ENCODE measurements at regions of chr6 and their contacts with region 1.

Region 1: GRCh38 chr6:7725849-7726415 is at the start of gene BMP6:
- H3K4me3 ChIP-seq: peak within 1 kb of the TSS; percentile 48
- H3K27ac ChIP-seq: peak within 1 kb of the TSS; percentile 33; the same call in 1 of the 2 replicates
- H3K4me1 ChIP-seq: peaks cover 15% of the 10 kb centered on the region
- CTCF ChIP-seq: no peak

Region 2: DNA sequence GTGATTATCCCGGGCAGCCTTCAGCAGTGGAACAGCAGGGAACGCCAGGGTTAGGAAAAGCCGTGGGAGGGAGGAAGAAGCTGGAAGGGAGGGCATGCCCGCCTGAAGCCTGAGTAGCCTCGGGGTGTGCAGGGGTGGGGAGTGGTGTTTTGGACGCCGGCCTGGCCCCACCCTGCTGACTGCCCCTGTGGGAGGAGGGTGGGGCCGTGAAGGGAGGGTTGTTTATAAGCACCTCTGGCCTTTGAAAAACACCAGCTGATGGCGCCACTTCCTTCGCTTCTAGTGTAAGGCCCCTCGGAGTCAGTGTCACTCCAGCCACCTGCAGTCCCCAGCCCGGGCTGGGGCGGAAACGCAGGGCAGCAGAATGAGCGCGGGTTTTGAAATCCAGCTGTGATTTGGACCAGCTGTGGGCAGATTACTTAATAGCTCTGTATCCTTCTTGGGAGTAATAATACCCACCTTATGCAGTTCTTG is 52.8 kb before region 1 on chr6:
- CTCF ChIA-PET with region 1: interaction called, 18 read pairs
- POLR2A ChIA-PET with region 1: no interaction called
- H3K4me3 ChIP-seq: no peak overlapping the region
- H3K27ac ChIP-seq: no peak overlapping the region
- H3K4me1 ChIP-seq: no peaks in the 10 kb centered on the region
- CTCF ChIP-seq: no peak

Region 3: GRCh38 chr6:7697820-7698623 is 27.9 kb before region 1 on chr6:
- CTCF ChIA-PET with region 1: interaction called, 13 read pairs
- POLR2A ChIA-PET with region 1: interaction called, 3 read pairs
- H3K4me3 ChIP-seq: no peak overlapping the region
- H3K27ac ChIP-seq: no peak overlapping the region; the same call in 1 of the 2 replicates
- H3K4me1 ChIP-seq: no peaks in the 10 kb centered on the region
- CTCF ChIP-seq: no peak

Region 4: DNA sequence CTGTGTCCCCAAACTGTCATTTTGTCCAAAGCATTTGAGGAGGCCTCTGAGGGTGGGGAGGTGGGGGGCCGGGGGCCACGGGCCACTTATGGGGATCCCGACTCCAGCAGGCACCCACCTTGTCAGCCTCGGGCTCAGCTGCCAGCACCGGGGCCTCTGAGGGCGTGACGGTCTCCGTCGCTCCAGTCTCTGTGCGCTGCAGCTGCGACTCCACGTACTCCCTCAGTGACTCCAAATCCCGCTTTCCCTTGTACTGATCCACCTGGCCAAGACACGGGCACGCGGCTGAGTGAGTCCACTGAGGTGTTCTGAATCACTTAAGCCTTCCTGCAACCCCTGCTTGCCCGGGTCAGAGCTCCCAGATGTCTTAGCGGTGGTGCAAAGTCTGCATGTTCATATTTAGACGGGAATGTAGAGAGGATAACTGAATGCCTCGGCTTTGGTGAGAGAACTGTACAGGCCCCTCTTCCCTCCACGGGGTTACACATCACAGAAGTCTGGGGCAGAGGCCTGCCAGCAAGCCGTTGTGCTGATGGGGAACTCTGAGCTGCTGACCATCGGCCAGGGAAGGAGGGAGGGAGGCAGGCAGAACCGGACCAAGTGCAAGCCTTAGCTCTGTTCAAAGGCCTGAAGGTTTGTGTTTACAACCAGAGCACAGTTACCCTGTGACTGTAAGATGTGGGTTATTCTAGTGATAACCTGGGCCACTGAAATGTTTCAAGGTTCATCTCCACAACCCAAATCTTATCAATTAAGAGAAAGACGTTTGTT is 162.8 kb after region 1 on chr6:
- CTCF ChIA-PET with region 1: interaction called, 10 read pairs
- POLR2A ChIA-PET with region 1: interaction called, 3 read pairs
- H3K4me3 ChIP-seq: no peak overlapping the region
- H3K27ac ChIP-seq: no peak overlapping the region
- H3K4me1 ChIP-seq: no peaks in the 10 kb centered on the region
- CTCF ChIP-seq: no peak

Region 5: GRCh38 chr6:7992002-7992815 is 266.3 kb after region 1 on chr6:
- CTCF ChIA-PET with region 1: interaction called, 71 read pairs
- POLR2A ChIA-PET with region 1: interaction called, 8 read pairs
- H3K4me3 ChIP-seq: no peak overlapping the region
- H3K27ac ChIP-seq: no peak overlapping the region
- H3K4me1 ChIP-seq: peaks cover 7% of the 10 kb centered on the region; the same call in 1 of the 2 replicates
- CTCF ChIP-seq: no peak

Region 6: GRCh38 chr6:8063761-8064637 is 338.1 kb after region 1 on chr6 and contains the start of gene BLOC1S5:
- CTCF ChIA-PET with region 1: interaction called, 64 read pairs
- POLR2A ChIA-PET with region 1: interaction called, 5 read pairs
- H3K4me3 ChIP-seq: peak within 1 kb of the TSS; percentile 64
- H3K27ac ChIP-seq: peak within 1 kb of the TSS; percentile 56; the same call in 1 of the 2 replicates
- H3K4me1 ChIP-seq: peaks cover 3% of the 10 kb centered on the region
- CTCF ChIP-seq: peak; percentile 73

Region 7: DNA sequence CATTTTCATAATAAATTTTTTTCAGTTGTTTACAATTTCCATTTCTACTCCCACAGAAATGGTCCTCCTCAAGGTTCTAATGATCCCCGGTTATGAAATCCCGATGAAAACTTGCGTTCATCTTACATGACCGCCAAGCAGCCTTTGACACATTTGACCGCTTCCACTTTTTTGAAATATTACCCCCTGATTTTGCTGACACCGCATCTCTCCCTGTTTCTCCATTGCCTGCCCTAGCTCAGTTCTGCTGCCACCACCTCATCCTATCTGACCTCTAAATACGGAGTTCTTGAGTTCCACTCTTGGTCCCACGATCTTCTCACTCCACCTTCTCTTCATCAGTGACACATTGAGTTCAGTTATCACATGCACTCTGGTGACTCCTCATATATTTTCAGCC is 635.3 kb after region 1 on chr6:
- CTCF ChIA-PET with region 1: no interaction called
- POLR2A ChIA-PET with region 1: no interaction called
- H3K4me3 ChIP-seq: no peak overlapping the region
- H3K27ac ChIP-seq: no peak overlapping the region
- H3K4me1 ChIP-seq: no peaks in the 10 kb centered on the region
- CTCF ChIP-seq: no peak